ENCODE measurements at regions of chr19 and their contacts with region 1.

Region 1: DNA sequence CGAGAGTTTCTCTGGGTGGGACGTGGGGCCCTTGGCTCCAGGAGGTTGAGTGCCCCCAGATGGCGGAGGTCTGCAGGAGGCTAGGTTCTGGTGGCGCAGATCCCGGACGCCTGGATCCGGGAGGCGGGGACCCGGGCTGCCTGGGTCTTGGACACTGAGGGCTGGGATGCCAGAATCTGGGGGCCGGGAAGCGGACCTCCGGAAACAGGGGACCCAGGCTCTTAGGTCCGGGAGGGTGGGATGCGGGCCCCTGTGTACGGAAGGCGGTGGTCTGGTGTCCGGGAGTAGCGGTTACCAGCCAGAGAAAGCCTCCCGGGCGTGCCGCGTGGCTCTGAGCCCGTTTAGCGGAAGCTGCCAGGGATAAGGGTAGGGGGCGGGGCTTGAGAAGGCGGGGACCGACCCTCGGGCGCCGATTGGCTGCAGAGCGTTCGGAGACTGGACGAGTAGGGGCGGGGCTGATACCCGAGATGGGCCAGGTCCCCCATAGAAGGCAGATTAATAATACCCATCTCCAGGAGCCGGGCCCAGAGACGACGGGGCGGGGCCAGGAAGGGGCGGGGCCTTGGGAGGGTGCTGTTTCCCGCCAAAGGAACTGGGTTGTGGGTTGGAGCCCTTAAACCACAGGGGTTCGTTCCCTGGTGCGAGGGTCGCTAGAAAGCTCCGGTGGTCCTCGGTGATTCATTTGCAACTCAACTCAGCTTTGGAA is at the start of gene SLC1A5:
- DNase-seq: peak; percentile 95 to 99
- H3K4me3 ChIP-seq: peak within 1 kb of the TSS; percentile 78 to 96 (median 90)
- H3K27ac ChIP-seq: peak within 1 kb of the TSS; percentile 77; the same call in 1 of the 2 replicates
- H3K4me1 ChIP-seq: peaks cover 6 to 17% (median 10%) of the 10 kb centered on the region in 4 experiments; a peak in 6 of 7 replicates
- H3K27me3 ChIP-seq: no peaks in the 10 kb centered on the region; a peak in 1 of 7 replicates
- CTCF ChIP-seq: no peak
- EP300 ChIP-seq: no peak
- POLR2A ChIP-seq: peak; percentile 99
- RAD21 ChIP-seq: no peak; a peak in 1 of 4 replicates
- total RNA-seq, gene SLC1A5: 290 and 291 TPM in 2 replicates

Region 2: GRCh38 chr19:46717034-46717723 is 71.2 kb before region 1 on chr19 and contains the start of gene PRKD2:
- CTCF ChIA-PET with region 1: no interaction called
- POLR2A ChIA-PET with region 1: interaction called, 17 read pairs
- DNase-seq: peak in 1 of 2 experiments; percentile 100
- H3K4me3 ChIP-seq: peak within 1 kb of the TSS; percentile 76 to 94 (median 81)
- H3K27ac ChIP-seq: peak within 1 kb of the TSS; percentile 78
- H3K4me1 ChIP-seq: peaks cover 0 to 15% (median 6%) of the 10 kb centered on the region in 4 experiments; a peak in 5 of 7 replicates
- H3K27me3 ChIP-seq: no peaks in the 10 kb centered on the region
- CTCF ChIP-seq: no peak
- EP300 ChIP-seq: no peak
- POLR2A ChIP-seq: peak in 1 of 2 experiments; percentile 66; a peak in 2 of 3 replicates
- RAD21 ChIP-seq: no peak
- total RNA-seq, gene PRKD2: 63.8 and 73.1 TPM in 2 replicates

Region 3: DNA sequence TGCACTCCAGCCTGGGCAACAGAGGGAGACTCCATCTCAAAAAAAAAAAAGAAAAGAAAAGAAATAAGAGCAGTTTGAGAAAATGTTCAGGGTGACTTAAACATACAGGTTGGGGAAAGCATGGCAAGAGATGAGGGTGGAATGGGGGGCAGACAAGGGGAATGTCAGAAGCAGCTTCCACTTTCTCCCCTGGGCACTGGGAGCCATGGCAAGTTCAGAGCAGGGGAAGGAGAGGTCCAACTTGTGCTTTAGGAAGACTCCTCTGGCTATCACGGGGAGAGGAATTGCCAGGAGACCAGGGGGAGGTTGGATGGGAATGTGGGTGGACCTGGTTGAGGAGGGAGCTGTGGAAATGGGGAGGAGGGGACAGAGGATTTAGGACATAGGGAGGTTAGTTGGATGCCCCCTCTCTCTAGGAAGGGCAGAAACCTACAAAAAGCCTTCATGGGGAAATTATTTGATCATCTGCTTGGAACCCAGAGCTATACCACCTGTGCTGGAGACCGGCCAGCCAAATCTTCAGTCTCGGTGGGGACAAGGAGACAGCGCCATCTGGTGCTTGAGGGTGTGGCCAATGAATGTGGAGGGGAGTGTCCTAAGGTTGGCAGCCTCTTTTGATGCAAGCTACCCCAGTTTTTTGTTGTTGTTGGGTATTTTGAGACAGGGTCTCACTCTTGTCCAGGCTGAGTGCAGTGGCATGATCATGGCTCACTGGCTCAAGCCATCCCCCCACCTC is 34.8 kb before region 1 on chr19:
- CTCF ChIA-PET with region 1: interaction called, 25 read pairs
- POLR2A ChIA-PET with region 1: interaction called, 25 read pairs
- DNase-seq: peak in 1 of 2 experiments; percentile 78
- H3K4me3 ChIP-seq: no peak overlapping the region
- H3K27ac ChIP-seq: no peak overlapping the region
- H3K4me1 ChIP-seq: no peaks in the 10 kb centered on the region; a peak in 2 of 7 replicates
- H3K27me3 ChIP-seq: no peaks in the 10 kb centered on the region
- CTCF ChIP-seq: peak; percentile 73 to 80 (median 78)
- EP300 ChIP-seq: no peak
- POLR2A ChIP-seq: no peak
- RAD21 ChIP-seq: peak; percentile 45 to 53

Region 4: DNA sequence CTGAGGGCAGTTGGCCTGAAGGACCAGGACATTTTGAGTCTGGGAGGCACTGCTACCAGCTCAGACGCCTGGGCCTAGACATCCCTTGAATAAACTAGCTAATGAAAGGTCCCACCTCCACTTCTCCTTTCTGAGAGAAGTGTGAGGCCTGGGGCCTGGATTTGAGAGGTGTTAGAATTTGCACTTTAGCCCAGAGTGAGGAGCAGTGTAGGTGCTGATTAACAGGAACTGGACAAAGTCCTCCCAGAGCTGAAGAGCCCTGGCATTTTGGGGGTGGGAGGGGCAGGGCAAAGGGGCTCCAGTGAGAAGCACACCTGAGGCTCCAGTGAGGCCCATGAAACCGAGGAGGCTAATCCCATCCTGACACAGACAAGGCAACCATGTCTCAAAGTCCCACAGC is 15.1 kb after region 1 on chr19:
- CTCF ChIA-PET with region 1: interaction called, 3 read pairs
- POLR2A ChIA-PET with region 1: interaction called, 34 read pairs
- DNase-seq: no peak
- H3K4me3 ChIP-seq: no peak overlapping the region
- H3K27ac ChIP-seq: no peak overlapping the region
- H3K4me1 ChIP-seq: no peaks in the 10 kb centered on the region
- H3K27me3 ChIP-seq: no peaks in the 10 kb centered on the region
- CTCF ChIP-seq: no peak
- EP300 ChIP-seq: no peak
- POLR2A ChIP-seq: no peak
- RAD21 ChIP-seq: no peak

Region 5: DNA sequence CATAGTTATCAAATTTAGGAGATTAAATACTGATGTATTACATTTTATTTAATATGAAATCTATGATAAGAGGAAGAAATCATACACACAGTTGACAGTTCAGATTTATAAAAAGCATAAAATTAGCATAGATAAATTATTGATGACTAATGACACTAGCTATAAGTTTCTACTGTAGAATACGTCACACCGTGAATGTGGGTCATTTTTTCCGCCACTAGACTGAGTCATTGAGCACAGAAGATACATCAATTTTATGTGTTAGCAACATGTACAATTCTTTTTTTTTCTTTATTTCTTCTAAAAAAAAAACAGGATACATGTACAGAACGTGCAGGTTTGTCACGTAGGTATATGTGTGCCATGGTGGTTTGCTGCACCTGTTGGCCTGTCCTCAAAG is 40.1 kb after region 1 on chr19:
- CTCF ChIA-PET with region 1: interaction called, 5 read pairs
- POLR2A ChIA-PET with region 1: interaction called, 68 read pairs
- DNase-seq: no peak
- H3K4me3 ChIP-seq: no peak overlapping the region
- H3K27ac ChIP-seq: no peak overlapping the region
- H3K4me1 ChIP-seq: 0 out of 7 replicates have a peak, but pooled peaks cover 0 to 2% (median 0%) of the 10 kb centered on the region in 4 experiments
- H3K27me3 ChIP-seq: no peaks in the 10 kb centered on the region
- CTCF ChIP-seq: no peak
- EP300 ChIP-seq: no peak
- POLR2A ChIP-seq: no peak
- RAD21 ChIP-seq: no peak

Region 6: GRCh38 chr19:46860125-46860845 is 71.9 kb after region 1 on chr19:
- CTCF ChIA-PET with region 1: no interaction called
- POLR2A ChIA-PET with region 1: interaction called, 19 read pairs
- DNase-seq: peak; percentile 95
- H3K4me3 ChIP-seq: peak overlapping the region; percentile 74 to 88 (median 84)
- H3K27ac ChIP-seq: peak overlapping the region; percentile 95
- H3K4me1 ChIP-seq: peaks cover 4 to 16% (median 8%) of the 10 kb centered on the region in 4 experiments
- H3K27me3 ChIP-seq: peaks cover 0 to 1% (median under 1%) of the 10 kb centered on the region in 4 experiments; a peak in 1 of 7 replicates
- CTCF ChIP-seq: no peak
- EP300 ChIP-seq: no peak
- POLR2A ChIP-seq: peak; percentile 74 to 81
- RAD21 ChIP-seq: no peak

Measured in H1 (cell line).